Naive thymus-derived CD4-positive, alpha-beta T cell (primary cell): ENCODE measurements at regions of chr3 and their contacts with region 1.

Region 1: GRCh38 chr3:170145278-170145677 is 36.3 kb downstream of the PHC3 start:
- DNase-seq: peak in 1 of 9 donors; percentile 9
- ATAC-seq: no peak
- H3K4me3 ChIP-seq: no peak overlapping the region
- H3K4me3 Mint-ChIP-seq: peak overlapping the region in 2 of 10 donors; percentile 55 to 63
- H3K27ac ChIP-seq: no peak overlapping the region
- H3K27ac Mint-ChIP-seq: peak overlapping the region in 5 of 9 donors; percentile 2 to 49 (median 24)
- H3K4me1 ChIP-seq: no peaks in the 10 kb centered on the region
- H3K4me1 Mint-ChIP-seq: peaks cover 12 to 62% (median 44%) of the 10 kb centered on the region in 7 donors
- H3K27me3 ChIP-seq: no peaks in the 10 kb centered on the region
- H3K27me3 Mint-ChIP-seq: no peaks in the 10 kb centered on the region

Region 2: GRCh38 chr3:170128977-170129431 is 16.3 kb before region 1 on chr3:
- CTCF ChIA-PET with region 1: no interaction called
- POLR2A ChIA-PET with region 1: interaction called, 3 read pairs
- intact Hi-C with region 1: loop called in 1 of 2 experiments (anchors 2 kb)
- DNase-seq: no peak
- ATAC-seq: peak; percentile 52
- H3K4me3 ChIP-seq: no peak overlapping the region
- H3K4me3 Mint-ChIP-seq: peak overlapping the region; percentile 53 to 89 (median 75)
- H3K27ac ChIP-seq: peak overlapping the region; percentile 40
- H3K27ac Mint-ChIP-seq: peak overlapping the region; percentile 50 to 88 (median 73)
- H3K4me1 ChIP-seq: peaks cover 0 to 9% of the 10 kb centered on the region in 2 donors
- H3K4me1 Mint-ChIP-seq: peaks cover 13 to 71% (median 42%) of the 10 kb centered on the region in 7 donors
- H3K27me3 ChIP-seq: no peaks in the 10 kb centered on the region
- H3K27me3 Mint-ChIP-seq: no peaks in the 10 kb centered on the region

Region 3: DNA sequence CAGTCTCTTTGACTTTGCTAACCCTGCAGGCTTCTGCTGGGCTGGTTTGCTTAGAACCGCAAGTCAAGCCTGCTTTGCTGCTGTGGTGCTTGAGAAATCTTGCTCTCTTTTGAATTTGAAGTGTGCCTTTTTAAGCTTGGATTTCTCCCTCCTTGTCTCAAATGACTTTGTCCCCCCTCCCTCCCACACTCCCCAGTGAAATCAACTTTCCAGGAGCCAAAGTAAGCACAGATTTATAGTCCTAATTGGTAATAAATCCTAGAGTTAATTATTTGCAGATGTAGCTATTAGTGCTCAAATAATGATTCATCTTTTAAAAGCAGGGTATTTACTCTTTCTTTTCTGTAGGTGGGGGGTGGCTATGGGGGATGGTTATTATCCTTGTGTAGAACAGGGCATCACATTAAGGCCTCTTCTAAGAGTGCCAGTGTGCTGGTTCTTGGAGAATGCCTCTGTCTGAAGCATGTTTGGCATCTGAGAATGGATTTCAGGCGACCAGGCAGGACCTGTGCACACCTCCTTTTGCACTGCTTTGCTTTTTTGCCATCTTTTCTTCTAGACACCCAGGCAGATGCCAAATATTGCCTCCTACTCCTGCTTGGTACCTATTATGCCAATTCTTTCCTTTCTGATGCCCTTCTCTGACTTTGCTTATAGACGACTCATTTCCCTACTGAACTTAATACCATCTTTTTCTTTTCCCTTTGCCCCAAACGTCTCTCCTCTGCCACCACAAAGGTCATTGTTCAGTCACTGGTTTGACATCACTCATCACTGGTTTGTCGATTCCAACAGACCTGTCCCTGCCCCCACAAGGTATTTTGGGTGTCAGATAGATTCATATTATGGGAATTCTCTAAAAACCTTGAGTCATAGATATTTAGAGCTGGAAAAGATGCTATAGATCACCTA is 324.1 kb after region 1 on chr3:
- CTCF ChIA-PET with region 1: no interaction called
- POLR2A ChIA-PET with region 1: no interaction called
- intact Hi-C with region 1: no loop called
- DNase-seq: no peak
- ATAC-seq: no peak
- H3K4me3 ChIP-seq: no peak overlapping the region
- H3K4me3 Mint-ChIP-seq: no peak overlapping the region
- H3K27ac ChIP-seq: no peak overlapping the region
- H3K27ac Mint-ChIP-seq: no peak overlapping the region
- H3K4me1 ChIP-seq: no peaks in the 10 kb centered on the region
- H3K4me1 Mint-ChIP-seq: no peaks in the 10 kb centered on the region
- H3K27me3 ChIP-seq: no peaks in the 10 kb centered on the region
- H3K27me3 Mint-ChIP-seq: peaks cover 15 to 41% (median 18%) of the 10 kb centered on the region in 5 donors